Left lung (tissue), 14 donors: ENCODE measurements at regions of chr18 and their contacts with region 1.

Region 1: DNA sequence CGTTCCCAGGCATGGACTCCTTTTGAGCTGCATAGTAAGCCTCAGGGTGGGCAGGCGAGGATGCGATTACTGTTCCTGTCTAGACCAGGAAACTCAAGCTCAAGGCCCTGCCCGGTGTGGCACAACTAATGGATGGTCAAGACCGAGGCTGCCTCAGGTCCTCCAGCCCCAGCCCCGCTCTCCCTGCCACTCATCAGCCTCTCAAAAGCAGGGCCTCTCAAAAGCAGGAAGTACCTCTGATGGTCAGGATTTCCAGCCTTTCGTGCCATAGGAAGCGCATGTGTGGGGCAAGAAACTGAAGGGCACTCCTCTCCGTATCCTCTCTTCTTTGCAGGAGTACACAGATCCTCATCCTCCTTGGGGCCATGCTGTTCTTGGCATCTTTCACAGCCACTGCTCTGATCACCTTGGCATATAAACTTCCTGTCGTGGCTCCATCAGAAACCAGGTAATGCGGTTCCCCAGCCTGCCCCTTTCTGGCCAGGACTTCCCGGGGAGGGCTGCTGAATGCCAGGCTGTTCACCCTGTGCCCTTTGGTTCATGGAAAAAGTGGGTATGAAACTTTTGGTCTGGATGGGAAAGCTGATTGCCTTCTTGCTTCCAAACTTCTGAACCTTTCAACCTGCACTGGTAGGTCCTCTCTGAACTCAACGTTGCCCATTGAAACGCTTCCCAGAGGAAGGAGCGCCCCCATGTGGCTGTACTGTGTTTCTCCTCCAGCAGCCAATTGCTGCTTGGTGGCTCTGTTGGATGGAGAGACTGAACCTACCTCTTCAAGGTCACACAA is 82.8 kb upstream of the SEC11C start:
- DNase-seq: peak in 3 of 4 donors; percentile 46 to 68 (median 65)
- ATAC-seq: peak; percentile 90
- H3K4me3 ChIP-seq: no peak overlapping the region
- H3K27ac ChIP-seq: no peak overlapping the region
- H3K4me1 ChIP-seq: no peaks in the 10 kb centered on the region
- H3K27me3 ChIP-seq: no peaks in the 10 kb centered on the region
- CTCF ChIP-seq: peak; percentile 68 to 80

Region 2: GRCh38 chr18:58781627-58782194 is 275.2 kb before region 1 on chr18:
- intact Hi-C with region 1: loop called (anchors 5 to 10 kb)
- DNase-seq: peak in 3 of 4 donors; percentile 67 to 84 (median 75)
- ATAC-seq: peak; percentile 89
- H3K4me3 ChIP-seq: no peak overlapping the region
- H3K27ac ChIP-seq: no peak overlapping the region
- H3K4me1 ChIP-seq: peaks cover 4 to 13% of the 10 kb centered on the region in 2 donors
- H3K27me3 ChIP-seq: no peaks in the 10 kb centered on the region
- CTCF ChIP-seq: peak; percentile 83 to 90

Region 3: GRCh38 chr18:59323931-59324622 is 267.2 kb after region 1 on chr18:
- intact Hi-C with region 1: no loop called
- DNase-seq: no peak
- ATAC-seq: no peak
- H3K4me3 ChIP-seq: no peak overlapping the region
- H3K27ac ChIP-seq: no peak overlapping the region
- H3K4me1 ChIP-seq: no peaks in the 10 kb centered on the region
- H3K27me3 ChIP-seq: no peaks in the 10 kb centered on the region
- CTCF ChIP-seq: no peak